Activated CD4-positive, alpha-beta memory T cell treated with anti-CD3 and anti-CD28 coated beads, Interleukin-2, amount 10 ng/mL, durations not matched to agents 7 days and 5 days (primary cell): ENCODE measurements at regions of chr14 and their contacts with region 1.

Region 1: GRCh38 chr14:24665440-24665991 is 31.5 kb upstream of the GZMB start:
- DNase-seq: peak; percentile 72
- H3K4me3 Mint-ChIP-seq: peak overlapping the region; percentile 49
- H3K27ac Mint-ChIP-seq: peak overlapping the region; percentile 81
- H3K4me1 Mint-ChIP-seq: peaks cover 90% of the 10 kb centered on the region
- H3K27me3 Mint-ChIP-seq: no peaks in the 10 kb centered on the region

Region 2: GRCh38 chr14:24678801-24679247 is 13.3 kb after region 1 on chr14:
- CTCF ChIA-PET with region 1: interaction called, 12 read pairs
- POLR2A ChIA-PET with region 1: interaction called, 42 read pairs
- DNase-seq: peak; percentile 82
- H3K4me3 Mint-ChIP-seq: peak overlapping the region; percentile 69
- H3K27ac Mint-ChIP-seq: peak overlapping the region; percentile 70
- H3K4me1 Mint-ChIP-seq: peaks cover 68% of the 10 kb centered on the region
- H3K27me3 Mint-ChIP-seq: peaks cover 6% of the 10 kb centered on the region